ENCODE measurements at regions of chr2 and their contacts with region 1.

Region 1: DNA sequence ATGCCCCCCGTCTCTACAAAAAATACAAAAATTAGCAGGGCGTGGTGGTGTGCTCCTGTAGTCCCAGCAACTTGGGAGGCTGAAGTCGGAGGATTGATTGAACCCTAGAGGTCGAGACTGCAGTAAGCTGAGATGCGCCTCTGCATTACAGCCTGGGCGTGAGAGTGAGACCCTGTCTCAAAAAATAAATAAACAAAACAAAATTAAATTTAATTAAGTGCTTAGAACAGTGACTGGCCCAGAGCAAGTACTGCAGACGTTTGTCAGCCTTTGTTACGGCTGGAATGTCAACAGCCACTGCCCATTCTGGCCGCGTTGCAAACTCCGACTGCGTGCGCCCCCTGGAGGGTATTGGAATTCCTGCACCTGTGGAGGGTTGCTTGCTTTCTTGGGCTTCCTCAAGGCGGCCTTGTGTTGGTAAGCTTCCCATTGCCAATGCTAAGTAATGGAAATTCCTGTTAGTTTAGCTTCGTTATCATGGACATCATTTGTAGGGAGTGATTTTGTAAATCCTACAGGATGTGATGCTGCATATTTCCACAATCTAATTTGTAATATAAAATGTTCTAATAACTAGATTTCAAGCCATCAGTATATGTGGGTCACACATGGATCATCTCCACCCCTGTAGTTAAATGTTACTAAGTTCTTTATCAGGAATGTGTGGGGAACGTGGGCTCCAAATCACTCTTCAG is 15.9 kb upstream of the ATP6V1B1 start:
- DNase-seq: peak; percentile 88 to 92 (median 90)
- ATAC-seq: peak; percentile 88
- H3K4me3 ChIP-seq: no peak overlapping the region
- H3K27ac ChIP-seq: no peak overlapping the region
- H3K4me1 ChIP-seq: peaks cover 13% of the 10 kb centered on the region
- H3K27me3 ChIP-seq: no peaks in the 10 kb centered on the region
- CTCF ChIP-seq: peak; percentile 80 to 98 (median 96)
- POLR2A ChIP-seq: no peak

Region 2: DNA sequence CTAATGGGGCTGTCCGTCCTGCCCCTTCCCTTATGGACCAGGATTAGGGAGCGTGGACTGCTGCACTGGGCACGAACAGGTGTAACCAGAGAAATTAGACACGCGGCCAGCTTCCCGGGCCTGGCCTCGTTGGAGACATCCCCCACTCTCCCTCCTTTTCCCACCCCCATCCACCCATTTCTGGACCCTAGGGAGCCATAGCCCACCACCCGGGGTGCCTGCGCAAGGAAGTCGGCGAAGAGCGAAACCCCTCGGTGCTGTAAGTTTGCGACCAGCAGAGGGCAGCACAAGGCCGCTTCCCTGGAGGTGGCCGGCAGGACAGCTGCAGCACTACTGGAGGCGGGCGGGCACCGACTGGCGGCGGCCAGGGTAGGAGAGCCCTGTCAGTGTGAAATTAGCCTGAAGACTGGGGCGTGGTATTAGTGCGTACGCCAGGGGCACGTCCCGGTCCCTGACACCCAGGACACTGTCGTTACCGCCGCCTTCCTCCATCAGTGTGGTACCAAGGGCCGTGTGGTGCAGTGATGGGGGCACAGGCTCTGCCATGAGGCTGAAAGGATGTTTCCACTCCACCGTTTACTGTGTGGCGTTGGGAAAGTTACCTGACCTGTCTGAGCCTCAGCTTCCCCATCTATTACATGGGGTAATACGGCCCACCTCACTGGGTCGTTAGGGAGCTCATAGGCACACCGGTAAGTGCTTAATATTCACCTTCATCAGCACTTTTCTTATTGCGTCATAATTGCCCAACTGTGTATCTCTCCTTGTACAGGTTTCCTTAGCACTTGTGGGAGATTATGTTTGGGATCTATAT is 48.2 kb before region 1 on chr2:
- intact Hi-C with region 1: loop called (anchors 5 kb)
- DNase-seq: peak; percentile 88 to 92 (median 92)
- ATAC-seq: peak; percentile 98
- H3K4me3 ChIP-seq: no peak overlapping the region
- H3K27ac ChIP-seq: no peak overlapping the region
- H3K4me1 ChIP-seq: peaks cover 10% of the 10 kb centered on the region
- H3K27me3 ChIP-seq: no peaks in the 10 kb centered on the region
- CTCF ChIP-seq: peak; percentile 83 to 99 (median 96)
- POLR2A ChIP-seq: no peak

Measured in body of pancreas (tissue), 4 donors.